Ovary (tissue), 10 donors: ENCODE measurements at regions of chr3 and their contacts with region 1.

Region 1: DNA sequence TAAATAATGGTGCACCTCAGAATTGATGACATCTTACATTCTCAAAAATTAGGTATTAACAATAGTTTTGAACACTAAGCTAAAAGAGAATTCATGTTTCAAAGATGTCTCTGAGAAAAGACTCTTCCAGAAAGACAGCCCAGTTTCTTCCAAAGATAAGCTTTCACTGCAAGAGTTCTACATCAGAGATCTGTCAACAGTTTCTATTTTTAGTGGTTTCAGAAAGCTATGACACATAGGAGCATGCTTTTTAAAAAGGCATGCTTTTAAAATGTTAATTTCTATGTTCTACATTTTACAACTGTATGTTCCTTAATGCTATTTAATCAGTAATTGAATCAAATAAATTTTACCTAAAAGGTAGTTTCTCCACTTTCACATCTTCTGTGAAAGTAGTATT is 88.2 kb downstream of the PLOD2 start:
- DNase-seq: no peak
- H3K4me3 ChIP-seq: no peak overlapping the region
- H3K27ac ChIP-seq: no peak overlapping the region
- H3K4me1 ChIP-seq: no peaks in the 10 kb centered on the region
- H3K27me3 ChIP-seq: no peaks in the 10 kb centered on the region
- CTCF ChIP-seq: no peak
- EP300 ChIP-seq: no peak
- POLR2A ChIP-seq: no peak

Region 2: DNA sequence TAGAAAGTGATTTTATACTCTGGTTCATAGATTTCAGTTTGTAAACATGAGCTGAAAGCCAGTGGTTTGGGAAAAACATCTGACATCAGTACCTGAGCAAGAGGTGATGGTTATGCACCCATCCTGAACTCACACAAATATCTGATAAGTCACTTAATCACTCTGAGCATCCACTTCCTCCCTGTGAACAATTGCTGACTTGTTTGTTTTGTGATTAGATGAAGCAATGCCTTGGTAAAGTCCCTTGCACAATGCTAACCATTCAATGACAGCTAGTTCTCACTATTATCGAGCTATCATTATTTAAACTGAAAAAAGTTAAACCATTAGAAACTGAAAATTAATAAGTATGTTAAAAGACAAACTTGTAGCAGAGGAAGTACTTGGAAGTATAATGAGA is 214.9 kb before region 1 on chr3:
- intact Hi-C with region 1: no loop called
- DNase-seq: no peak
- H3K4me3 ChIP-seq: no peak overlapping the region
- H3K27ac ChIP-seq: no peak overlapping the region
- H3K4me1 ChIP-seq: no peaks in the 10 kb centered on the region
- H3K27me3 ChIP-seq: no peaks in the 10 kb centered on the region
- CTCF ChIP-seq: no peak
- EP300 ChIP-seq: no peak
- POLR2A ChIP-seq: no peak

Region 3: DNA sequence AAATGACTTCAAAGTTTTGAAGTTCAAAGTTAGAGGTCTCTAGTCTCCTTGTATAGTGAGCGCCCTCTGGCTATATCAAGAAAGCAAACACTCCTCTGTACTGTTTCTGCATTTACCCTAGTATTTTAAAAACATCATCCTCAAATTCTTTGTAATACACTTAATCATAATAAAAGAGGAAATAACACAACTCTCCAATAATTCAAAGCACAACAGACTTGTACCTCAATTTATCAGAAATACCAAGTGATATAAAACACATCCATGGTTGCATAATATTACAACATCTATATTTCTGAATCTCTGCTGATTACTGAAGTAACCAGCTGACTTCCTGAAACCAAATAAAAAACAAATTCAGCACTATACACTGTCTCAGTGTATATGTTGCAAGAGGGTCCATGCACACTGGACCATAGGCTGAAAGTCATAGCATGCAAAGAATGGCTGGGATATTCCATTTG is 75.7 kb after region 1 on chr3:
- intact Hi-C with region 1: loop called in 1 of 4 experiments (anchors 5 kb)
- DNase-seq: no peak
- H3K4me3 ChIP-seq: no peak overlapping the region
- H3K27ac ChIP-seq: no peak overlapping the region
- H3K4me1 ChIP-seq: peaks cover 13% of the 10 kb centered on the region
- H3K27me3 ChIP-seq: no peaks in the 10 kb centered on the region
- CTCF ChIP-seq: peak in 2 of 3 donors; percentile 28 to 34
- EP300 ChIP-seq: no peak
- POLR2A ChIP-seq: no peak

Region 4: DNA sequence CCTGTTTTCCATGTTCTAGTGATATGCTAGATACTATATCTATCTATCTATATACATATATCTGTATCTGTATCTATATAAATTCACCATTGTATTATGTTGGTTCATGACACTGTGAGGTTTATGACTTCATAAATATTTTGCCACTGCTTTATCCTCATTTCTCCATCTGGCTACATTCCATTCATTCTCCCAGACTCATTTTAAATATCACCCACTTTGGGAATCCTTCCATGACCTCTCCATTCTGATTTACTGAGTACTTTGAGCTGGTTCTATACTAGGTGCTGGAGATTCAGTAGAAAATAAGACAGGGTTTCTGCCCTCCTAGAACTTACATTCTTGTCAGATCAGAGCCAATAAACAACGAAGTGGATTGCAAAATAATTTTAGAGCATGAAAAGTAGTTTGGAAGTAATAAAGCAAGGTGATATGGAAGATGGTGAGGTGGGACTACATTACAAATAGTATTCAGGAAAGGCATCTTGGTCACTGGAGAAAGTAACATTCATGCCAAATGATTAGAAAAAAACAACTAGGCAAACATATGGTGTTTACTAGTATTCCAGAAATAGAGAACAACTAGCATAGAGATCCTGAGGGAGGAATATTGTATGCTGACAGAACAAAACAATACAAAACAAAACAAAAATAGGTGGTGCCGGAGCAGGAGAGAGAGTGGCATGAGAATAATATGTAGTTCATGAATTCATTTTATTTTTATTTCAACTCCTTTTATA is 189.7 kb after region 1 on chr3:
- intact Hi-C with region 1: no loop called
- DNase-seq: no peak
- H3K4me3 ChIP-seq: no peak overlapping the region
- H3K27ac ChIP-seq: no peak overlapping the region
- H3K4me1 ChIP-seq: no peaks in the 10 kb centered on the region
- H3K27me3 ChIP-seq: no peaks in the 10 kb centered on the region
- CTCF ChIP-seq: no peak
- EP300 ChIP-seq: no peak
- POLR2A ChIP-seq: no peak